CD14-positive monocyte (primary cell): ENCODE measurements at regions of chr11 and their contacts with region 1.

Region 1: DNA sequence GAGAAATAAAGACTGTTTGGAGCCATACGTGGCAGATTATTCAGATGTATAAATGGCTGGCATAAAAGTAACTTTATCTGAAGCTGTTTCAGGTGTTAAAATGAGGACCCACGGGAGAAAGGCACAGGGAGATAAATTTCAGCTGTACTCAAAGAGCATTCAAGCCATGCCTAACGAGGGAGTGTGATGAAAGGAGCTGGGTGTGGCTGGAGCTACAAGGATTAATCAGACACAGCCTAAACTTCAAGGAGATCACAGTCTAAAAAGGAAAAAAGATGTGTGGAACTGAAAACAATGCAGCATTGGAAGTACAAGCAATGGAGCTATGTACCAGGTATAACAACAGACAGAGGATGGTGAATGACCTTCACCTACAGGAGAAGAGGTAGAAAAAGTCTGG is 120.8 kb upstream of the APOA1 start:
- DNase-seq: no peak
- H3K4me3 ChIP-seq: no peak overlapping the region
- H3K4me3 Mint-ChIP-seq: no peak overlapping the region
- H3K27ac ChIP-seq: peak overlapping the region in 1 of 2 donors; percentile 6
- H3K27ac Mint-ChIP-seq: peak overlapping the region; percentile 29 to 75 (median 46)
- H3K4me1 ChIP-seq: peaks cover 13 to 14% of the 10 kb centered on the region in 2 donors
- H3K4me1 Mint-ChIP-seq: peaks cover 37% of the 10 kb centered on the region
- H3K27me3 ChIP-seq: no peaks in the 10 kb centered on the region
- H3K27me3 Mint-ChIP-seq: no peaks in the 10 kb centered on the region
- CTCF ChIP-seq: no peak

Region 2: GRCh38 chr11:117064275-117064674 is 106.0 kb after region 1 on chr11:
- intact Hi-C with region 1: loop called in 1 of 2 experiments (anchors 10 kb)
- DNase-seq: no peak
- H3K4me3 ChIP-seq: no peak overlapping the region
- H3K4me3 Mint-ChIP-seq: no peak overlapping the region
- H3K27ac ChIP-seq: no peak overlapping the region
- H3K27ac Mint-ChIP-seq: peak overlapping the region in 2 of 7 donors; percentile 17 to 35
- H3K4me1 ChIP-seq: peaks cover 9 to 19% of the 10 kb centered on the region in 2 donors
- H3K4me1 Mint-ChIP-seq: peaks cover 51% of the 10 kb centered on the region
- H3K27me3 ChIP-seq: no peaks in the 10 kb centered on the region
- H3K27me3 Mint-ChIP-seq: no peaks in the 10 kb centered on the region
- CTCF ChIP-seq: no peak